Endothelial cell of umbilical vein (primary cell): ENCODE measurements at regions of chr7 and their contacts with region 1.

Region 1: DNA sequence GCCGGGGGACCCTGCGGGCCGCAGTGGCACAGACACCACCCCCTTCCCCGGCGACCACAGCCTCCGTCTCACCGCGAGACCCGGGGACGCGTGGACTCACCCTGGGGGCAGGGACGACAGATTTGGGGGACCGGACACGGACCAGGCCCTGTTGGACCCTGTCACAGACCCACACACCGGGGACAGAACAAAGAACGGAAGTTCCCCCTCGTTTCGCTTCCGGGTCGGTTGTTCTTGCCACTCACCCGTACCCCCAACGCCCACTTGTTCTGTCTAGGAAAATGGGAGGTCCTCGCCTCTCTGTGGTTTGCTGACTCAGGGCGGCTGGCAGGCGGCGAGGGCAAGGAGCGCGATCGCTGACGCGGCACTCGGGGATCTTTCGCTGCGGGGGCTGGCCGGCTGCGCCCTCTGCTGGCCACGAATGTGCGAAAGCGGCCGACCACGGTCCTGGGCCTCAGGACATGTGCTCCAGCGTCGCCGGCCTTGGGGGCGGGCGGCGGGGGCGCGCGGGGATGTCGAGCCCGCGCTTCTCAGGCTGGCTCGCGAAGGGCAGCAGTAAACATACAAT is at the start of gene ZNF3:
- DNase-seq: peak; percentile 100
- H3K4me3 ChIP-seq: peak within 1 kb of the TSS; percentile 85 to 92 (median 89)
- H3K27ac ChIP-seq: peak within 1 kb of the TSS; percentile 78
- H3K4me1 ChIP-seq: peaks cover 19% of the 10 kb centered on the region
- H3K27me3 ChIP-seq: no peaks in the 10 kb centered on the region
- CTCF ChIP-seq: peak; percentile 96 to 98
- POLR2A ChIP-seq: peak; percentile 86
- total RNA-seq, gene ZNF3: 30.9 and 31.1 TPM in 2 replicates

Region 2: DNA sequence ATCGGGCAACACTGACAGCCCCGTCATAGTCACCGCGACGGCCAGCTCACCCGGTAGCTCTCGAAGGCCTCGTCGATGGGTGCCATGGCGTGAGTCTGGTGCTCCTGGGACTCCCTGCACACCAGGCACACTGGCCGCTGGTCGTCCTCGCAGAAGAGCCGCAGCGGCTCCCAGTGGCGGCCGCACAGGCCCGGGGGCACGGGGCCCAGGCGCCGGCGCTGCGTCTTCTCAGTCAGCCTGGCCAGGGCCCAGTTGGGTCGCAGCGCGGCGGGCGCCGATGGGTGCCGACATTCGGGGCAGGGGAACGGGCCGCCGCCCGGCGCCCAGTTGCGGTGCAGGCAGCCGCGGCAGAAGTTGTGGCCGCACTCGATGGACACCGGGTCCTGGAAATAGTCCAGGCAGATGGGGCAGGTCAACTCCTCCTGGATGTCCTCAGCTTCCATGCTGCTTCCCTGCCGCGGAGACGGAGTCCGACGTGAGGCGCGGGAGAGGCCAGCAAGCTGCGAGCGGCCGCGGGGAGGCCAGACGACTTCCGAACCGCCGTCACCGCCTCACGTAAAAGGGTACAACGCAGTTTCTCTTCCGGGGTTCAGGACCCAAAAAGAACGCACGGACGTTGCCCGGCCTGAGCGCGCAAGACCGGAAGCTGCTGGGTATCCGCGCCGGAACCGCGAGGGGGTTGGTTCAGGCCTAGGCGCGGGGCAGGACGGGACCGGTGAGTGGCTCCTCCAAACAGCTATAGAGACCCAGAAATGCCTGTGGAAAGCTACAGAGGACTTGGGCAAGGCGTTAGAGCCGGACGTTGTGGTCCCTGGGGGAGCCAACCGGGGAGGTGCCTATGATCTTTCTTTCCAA is 162.4 kb before region 1 on chr7 and contains the start of gene TRIM4:
- CTCF ChIA-PET with region 1: interaction called, 3 read pairs
- POLR2A ChIA-PET with region 1: interaction called, 3 read pairs
- dilution Hi-C with region 1: no loop called
- intact Hi-C with region 1: loop called (anchors 10 kb)
- DNase-seq: peak; percentile 90
- H3K4me3 ChIP-seq: peak within 1 kb of the TSS; percentile 51 to 84 (median 58)
- H3K27ac ChIP-seq: peak within 1 kb of the TSS; percentile 63
- H3K4me1 ChIP-seq: peaks cover 17% of the 10 kb centered on the region
- H3K27me3 ChIP-seq: no peaks in the 10 kb centered on the region
- CTCF ChIP-seq: peak; percentile 13 to 42
- POLR2A ChIP-seq: peak; percentile 77
- total RNA-seq, gene TRIM4: 19.1 and 22.1 TPM in 2 replicates

Region 3: DNA sequence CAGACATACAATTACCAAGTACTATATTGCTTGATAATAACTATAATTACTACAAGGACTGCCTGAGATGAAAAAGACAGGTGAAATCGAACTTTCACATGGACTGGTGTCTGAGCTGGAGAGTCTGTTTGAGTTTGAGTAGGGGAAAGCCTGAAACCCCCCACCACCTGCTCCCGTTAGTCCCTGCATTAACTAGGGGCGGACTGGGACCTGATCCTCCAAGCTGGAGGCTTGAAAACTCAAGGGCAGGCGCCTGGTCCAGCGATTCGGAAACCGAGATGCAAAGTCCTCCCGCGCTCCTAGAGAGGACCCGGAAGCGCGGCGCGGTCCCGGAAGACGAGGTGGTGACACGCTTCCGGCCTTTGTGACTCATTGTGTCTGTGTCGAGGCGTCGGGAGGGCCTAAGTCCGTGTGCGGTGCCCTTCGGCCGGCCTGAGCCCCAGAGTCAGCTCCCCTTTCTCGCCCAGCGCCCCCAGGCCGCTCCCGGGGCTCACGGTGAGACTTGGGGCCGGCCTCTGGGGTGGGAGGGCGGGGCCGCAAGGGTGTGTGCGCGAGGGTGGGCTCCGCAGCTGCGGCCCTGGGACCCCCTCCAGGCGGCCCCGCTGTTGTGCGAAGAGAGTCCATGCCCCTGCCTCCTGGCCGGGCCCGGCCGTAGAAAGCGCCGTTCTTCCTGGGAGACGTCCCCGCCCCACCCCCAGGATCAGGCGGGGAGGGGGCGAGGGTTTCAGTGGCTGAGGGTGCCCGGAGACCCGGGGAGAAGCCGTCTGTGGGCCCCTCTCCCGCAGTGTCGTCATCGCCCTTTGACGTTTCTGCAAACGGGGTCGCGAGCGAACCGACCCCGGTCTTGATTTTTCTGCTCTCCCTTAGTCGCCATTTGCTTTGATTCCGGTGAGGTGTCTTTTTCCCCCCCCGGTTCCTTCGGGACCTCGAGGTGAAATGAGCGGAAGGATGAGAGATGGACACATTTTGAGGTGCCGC is 66.1 kb before region 1 on chr7 and contains the start of gene ZKSCAN1:
- CTCF ChIA-PET with region 1: no interaction called
- POLR2A ChIA-PET with region 1: no interaction called
- dilution Hi-C with region 1: no loop called
- intact Hi-C with region 1: loop called (anchors 1 kb)
- DNase-seq: peak; percentile 89
- H3K4me3 ChIP-seq: peak within 1 kb of the TSS; percentile 92 to 100 (median 97)
- H3K27ac ChIP-seq: peak within 1 kb of the TSS; percentile 98
- H3K4me1 ChIP-seq: peaks cover 12% of the 10 kb centered on the region
- H3K27me3 ChIP-seq: no peaks in the 10 kb centered on the region
- CTCF ChIP-seq: no peak
- POLR2A ChIP-seq: peak; percentile 89
- total RNA-seq, gene ZKSCAN1: 52.8 and 57.8 TPM in 2 replicates

Region 4: GRCh38 chr7:100119062-100119700 is 37.6 kb after region 1 on chr7 and contains the starts of genes CNPY4 and TAF6:
- CTCF ChIA-PET with region 1: no interaction called
- POLR2A ChIA-PET with region 1: no interaction called
- dilution Hi-C with region 1: no loop called
- intact Hi-C with region 1: no loop called
- DNase-seq: peak; percentile 96
- H3K4me3 ChIP-seq: peak within 1 kb of the TSS; percentile 70 to 89 (median 77)
- H3K27ac ChIP-seq: peak within 1 kb of the TSS; percentile 83
- H3K4me1 ChIP-seq: peaks cover 11% of the 10 kb centered on the region
- H3K27me3 ChIP-seq: no peaks in the 10 kb centered on the region
- CTCF ChIP-seq: no peak
- POLR2A ChIP-seq: peak; percentile 86
- total RNA-seq, gene CNPY4: 18.0 and 33.7 TPM in 2 replicates
- total RNA-seq, gene TAF6: 64.6 and 67.3 TPM in 2 replicates